Naive thymus-derived CD4-positive, alpha-beta T cell (primary cell): ENCODE measurements at regions of chr2 and their contacts with region 1.

Region 1: DNA sequence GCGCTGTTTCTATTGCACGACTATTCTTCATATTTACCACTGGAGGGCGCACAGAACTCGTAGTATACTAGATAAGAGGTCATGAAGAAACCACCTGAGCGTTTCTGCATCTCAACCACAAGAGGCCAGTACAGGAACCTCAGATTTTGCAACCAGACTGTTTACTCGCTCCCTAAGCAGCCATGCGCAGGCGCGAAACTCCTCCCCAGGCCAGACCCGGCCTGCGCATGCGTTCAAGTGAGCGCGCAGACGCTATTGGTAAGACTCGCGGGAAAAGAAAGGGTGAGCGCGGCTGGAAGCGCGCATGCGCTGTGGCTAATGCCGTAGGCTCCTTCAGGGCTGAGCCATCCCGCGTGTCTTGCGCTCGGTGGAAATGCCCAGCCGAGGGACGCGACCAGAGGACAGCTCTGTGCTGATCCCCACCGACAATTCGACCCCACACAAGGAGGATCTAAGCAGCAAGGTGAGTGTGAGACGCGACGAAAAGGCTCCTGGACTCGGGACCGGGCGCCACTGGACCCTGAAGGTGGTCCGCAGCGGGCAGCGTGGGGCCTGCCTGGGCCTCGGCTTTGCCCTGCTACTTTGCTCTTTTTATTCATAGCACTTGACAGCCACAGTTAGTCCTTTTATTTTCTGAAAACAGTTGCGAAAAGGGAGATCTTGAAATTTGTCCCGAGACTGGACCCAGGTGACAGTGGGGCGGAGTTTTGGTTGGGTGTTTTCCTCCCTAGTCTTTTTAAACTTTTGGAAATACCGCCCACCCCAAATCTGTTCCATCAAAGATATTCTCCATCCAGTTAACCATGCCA is at the start of gene ASNSD1:
- DNase-seq: peak; percentile 97 to 100 (median 99)
- ATAC-seq: peak; percentile 97
- H3K4me3 ChIP-seq: peak within 1 kb of the TSS; percentile 86
- H3K4me3 Mint-ChIP-seq: no peak within 1 kb of the TSS
- H3K27ac ChIP-seq: peak within 1 kb of the TSS; percentile 95
- H3K27ac Mint-ChIP-seq: peak within 1 kb of the TSS in 1 of 9 donors; percentile 91
- H3K4me1 ChIP-seq: peaks cover 32 to 38% of the 10 kb centered on the region in 2 donors
- H3K4me1 Mint-ChIP-seq: peaks cover 32 to 62% (median 43%) of the 10 kb centered on the region in 7 donors
- H3K27me3 ChIP-seq: no peaks in the 10 kb centered on the region
- H3K27me3 Mint-ChIP-seq: no peaks in the 10 kb centered on the region
- total RNA-seq, gene ASNSD1: 24.0 to 48.9 (median 40.7) TPM

Region 2: DNA sequence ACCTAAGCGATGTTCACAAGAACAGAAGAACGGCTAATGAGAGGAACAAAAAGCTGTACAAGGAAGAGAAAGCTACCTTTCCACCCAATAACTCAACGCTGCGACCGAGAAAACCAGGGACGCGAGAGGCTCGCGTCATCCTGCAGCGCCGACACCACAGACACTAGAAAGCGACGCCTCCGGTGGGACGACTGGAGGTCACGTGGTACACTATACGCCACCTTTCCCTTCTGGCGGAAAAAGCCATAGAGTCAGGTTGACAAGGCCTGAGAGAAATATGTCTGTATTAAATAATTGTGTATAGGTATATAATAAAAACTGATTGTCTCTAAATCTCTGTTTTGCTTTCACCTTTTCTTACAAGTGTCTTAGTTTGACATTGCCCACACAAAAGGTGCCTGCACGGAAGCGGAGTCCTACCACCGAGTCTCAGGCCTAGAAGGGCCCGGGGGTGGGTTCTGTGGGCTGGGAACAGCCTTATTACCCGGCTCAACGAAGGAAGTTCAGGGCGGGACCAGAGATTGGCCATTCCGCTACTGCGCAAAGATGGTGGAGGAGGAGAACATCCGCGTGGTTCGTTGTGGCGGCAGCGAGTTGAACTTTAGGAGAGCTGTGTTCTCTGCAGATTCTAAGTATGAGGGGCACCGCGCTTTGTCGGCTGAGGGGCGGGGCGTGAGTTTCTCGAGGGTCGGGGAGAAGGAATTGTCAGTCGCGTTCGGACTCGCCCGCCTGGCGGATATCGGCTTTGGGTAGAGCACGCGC is 220.2 kb before region 1 on chr2 and contains the start of gene WDR75:
- CTCF ChIA-PET with region 1: interaction called, 4 read pairs
- POLR2A ChIA-PET with region 1: interaction called, 14 read pairs
- intact Hi-C with region 1: loop called (anchors 1 kb)
- DNase-seq: peak; percentile 73 to 96 (median 94)
- ATAC-seq: peak; percentile 97
- H3K4me3 ChIP-seq: peak within 1 kb of the TSS; percentile 83
- H3K4me3 Mint-ChIP-seq: peak within 1 kb of the TSS in 6 of 10 donors; percentile 99 to 100 (median 100)
- H3K27ac ChIP-seq: peak within 1 kb of the TSS; percentile 92
- H3K27ac Mint-ChIP-seq: peak within 1 kb of the TSS in 8 of 9 donors; percentile 97 to 100 (median 100)
- H3K4me1 ChIP-seq: peaks cover 10 to 14% of the 10 kb centered on the region in 2 donors
- H3K4me1 Mint-ChIP-seq: peaks cover 3 to 13% (median 8%) of the 10 kb centered on the region in 7 donors
- H3K27me3 ChIP-seq: no peaks in the 10 kb centered on the region
- H3K27me3 Mint-ChIP-seq: peaks cover 0 to 10% (median 0%) of the 10 kb centered on the region in 5 donors
- total RNA-seq, gene WDR75: 39.9 to 67.4 (median 60.7) TPM

Region 3: GRCh38 chr2:189698020-189698887 is 36.9 kb after region 1 on chr2:
- CTCF ChIA-PET with region 1: interaction called, 56 read pairs
- POLR2A ChIA-PET with region 1: interaction called, 12 read pairs
- intact Hi-C with region 1: loop called (anchors 1 kb)
- DNase-seq: peak in 7 of 9 donors; percentile 25 to 55 (median 51)
- ATAC-seq: peak; percentile 84
- H3K4me3 ChIP-seq: no peak overlapping the region
- H3K4me3 Mint-ChIP-seq: peak overlapping the region in 6 of 10 donors; percentile 2 to 44 (median 21)
- H3K27ac ChIP-seq: no peak overlapping the region
- H3K27ac Mint-ChIP-seq: peak overlapping the region in 4 of 9 donors; percentile 15 to 72 (median 49)
- H3K4me1 ChIP-seq: no peaks in the 10 kb centered on the region
- H3K4me1 Mint-ChIP-seq: peaks cover 0 to 8% (median 4%) of the 10 kb centered on the region in 7 donors
- H3K27me3 ChIP-seq: no peaks in the 10 kb centered on the region
- H3K27me3 Mint-ChIP-seq: no peaks in the 10 kb centered on the region

Region 4: GRCh38 chr2:189783927-189784867 is 122.8 kb after region 1 on chr2 and contains the starts of genes ORMDL1 and PMS1:
- CTCF ChIA-PET with region 1: no interaction called
- POLR2A ChIA-PET with region 1: interaction called, 13 read pairs
- intact Hi-C with region 1: loop called (anchors 1 kb)
- DNase-seq: peak; percentile 90 to 96 (median 94)
- ATAC-seq: peak; percentile 95
- H3K4me3 ChIP-seq: peak within 1 kb of the TSS; percentile 76
- H3K4me3 Mint-ChIP-seq: peak within 1 kb of the TSS; percentile 86 to 97 (median 94)
- H3K27ac ChIP-seq: peak within 1 kb of the TSS; percentile 92
- H3K27ac Mint-ChIP-seq: peak within 1 kb of the TSS; percentile 89 to 97 (median 95)
- H3K4me1 ChIP-seq: peaks cover 21 to 24% of the 10 kb centered on the region in 2 donors
- H3K4me1 Mint-ChIP-seq: peaks cover 26 to 72% (median 57%) of the 10 kb centered on the region in 7 donors
- H3K27me3 ChIP-seq: no peaks in the 10 kb centered on the region
- H3K27me3 Mint-ChIP-seq: no peaks in the 10 kb centered on the region
- total RNA-seq, gene ORMDL1: 80.1 to 208 (median 142) TPM
- total RNA-seq, gene PMS1: 18.2 to 30.1 (median 22.5) TPM

Region 5: GRCh38 chr2:190093793-190094192 is 432.4 kb after region 1 on chr2:
- CTCF ChIA-PET with region 1: no interaction called
- POLR2A ChIA-PET with region 1: no interaction called
- intact Hi-C with region 1: no loop called
- DNase-seq: no peak
- ATAC-seq: no peak
- H3K4me3 ChIP-seq: no peak overlapping the region
- H3K4me3 Mint-ChIP-seq: no peak overlapping the region
- H3K27ac ChIP-seq: no peak overlapping the region
- H3K27ac Mint-ChIP-seq: no peak overlapping the region
- H3K4me1 ChIP-seq: no peaks in the 10 kb centered on the region
- H3K4me1 Mint-ChIP-seq: peaks cover 0 to 3% (median 0%) of the 10 kb centered on the region in 7 donors
- H3K27me3 ChIP-seq: no peaks in the 10 kb centered on the region
- H3K27me3 Mint-ChIP-seq: no peaks in the 10 kb centered on the region

Region 6: DNA sequence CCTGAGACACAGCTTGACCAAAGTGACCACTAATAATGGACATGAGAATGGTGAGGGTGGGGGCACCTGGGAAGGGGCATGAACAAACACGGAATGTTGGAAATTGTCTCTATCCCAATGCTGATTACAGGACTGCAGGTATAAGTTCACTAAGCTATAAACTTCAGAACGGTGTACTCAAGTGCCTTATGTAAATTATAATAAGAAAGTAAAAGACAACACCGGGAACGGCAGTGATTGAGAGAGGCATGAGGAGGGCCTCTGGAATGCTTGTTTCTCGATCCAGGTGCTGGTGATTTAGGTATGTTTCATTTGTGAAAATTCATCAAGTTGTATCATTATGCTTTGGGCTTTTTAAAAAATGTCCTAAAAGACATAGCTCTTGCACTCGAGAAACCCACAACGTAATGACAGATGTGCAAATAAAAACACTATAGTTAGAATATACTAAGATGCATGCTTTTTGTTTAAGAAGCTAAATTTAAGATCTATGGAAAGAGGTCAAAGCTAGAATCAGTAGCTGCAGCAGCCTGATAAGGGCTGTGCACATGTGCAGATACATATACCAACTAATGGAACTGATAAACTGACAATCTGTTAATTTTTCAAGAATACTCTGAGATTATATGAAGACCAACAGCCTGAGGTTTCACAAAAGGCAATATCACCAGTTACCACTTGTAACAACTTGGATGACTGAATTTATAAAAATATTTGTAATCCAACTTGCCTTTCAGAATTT is 650.7 kb after region 1 on chr2:
- CTCF ChIA-PET with region 1: no interaction called
- POLR2A ChIA-PET with region 1: no interaction called
- intact Hi-C with region 1: loop called in 1 of 2 experiments (anchors 5 kb)
- DNase-seq: no peak
- ATAC-seq: no peak
- H3K4me3 ChIP-seq: no peak overlapping the region
- H3K4me3 Mint-ChIP-seq: no peak overlapping the region
- H3K27ac ChIP-seq: no peak overlapping the region
- H3K27ac Mint-ChIP-seq: no peak overlapping the region
- H3K4me1 ChIP-seq: no peaks in the 10 kb centered on the region
- H3K4me1 Mint-ChIP-seq: peaks cover 7 to 41% (median 24%) of the 10 kb centered on the region in 7 donors
- H3K27me3 ChIP-seq: no peaks in the 10 kb centered on the region
- H3K27me3 Mint-ChIP-seq: no peaks in the 10 kb centered on the region

Region 7: GRCh38 chr2:190408538-190409271 is 747.4 kb after region 1 on chr2:
- CTCF ChIA-PET with region 1: no interaction called
- POLR2A ChIA-PET with region 1: interaction called, 3 read pairs
- intact Hi-C with region 1: loop called (anchors 1 to 2 kb)
- DNase-seq: peak in 8 of 9 donors; percentile 69 to 86 (median 82)
- ATAC-seq: peak; percentile 68
- H3K4me3 ChIP-seq: peak overlapping the region; percentile 76
- H3K4me3 Mint-ChIP-seq: peak overlapping the region; percentile 87 to 95 (median 92)
- H3K27ac ChIP-seq: peak overlapping the region; percentile 100
- H3K27ac Mint-ChIP-seq: peak overlapping the region; percentile 94 to 98 (median 98)
- H3K4me1 ChIP-seq: peaks cover 28 to 41% of the 10 kb centered on the region in 2 donors
- H3K4me1 Mint-ChIP-seq: peaks cover 29 to 52% (median 45%) of the 10 kb centered on the region in 7 donors
- H3K27me3 ChIP-seq: no peaks in the 10 kb centered on the region
- H3K27me3 Mint-ChIP-seq: no peaks in the 10 kb centered on the region

Region 8: GRCh38 chr2:190804182-190804795 is 1142.9 kb after region 1 on chr2:
- CTCF ChIA-PET with region 1: no interaction called
- POLR2A ChIA-PET with region 1: no interaction called
- intact Hi-C with region 1: loop called in 1 of 2 experiments (anchors 10 kb)
- DNase-seq: peak in 5 of 9 donors; percentile 6 to 19 (median 13)
- ATAC-seq: no peak
- H3K4me3 ChIP-seq: no peak overlapping the region
- H3K4me3 Mint-ChIP-seq: no peak overlapping the region
- H3K27ac ChIP-seq: no peak overlapping the region
- H3K27ac Mint-ChIP-seq: no peak overlapping the region
- H3K4me1 ChIP-seq: no peaks in the 10 kb centered on the region
- H3K4me1 Mint-ChIP-seq: peaks cover 0 to 9% (median 0%) of the 10 kb centered on the region in 7 donors
- H3K27me3 ChIP-seq: no peaks in the 10 kb centered on the region
- H3K27me3 Mint-ChIP-seq: no peaks in the 10 kb centered on the region